GM12878 (cell line): ENCODE measurements at regions of chr17 and their contacts with region 1.

Region 1: GRCh38 chr17:40450175-40450574 is 6.9 kb downstream of the IGFBP4 start:
- DNase-seq: no peak
- ATAC-seq: peak; percentile 69
- H3K4me3 ChIP-seq: no peak overlapping the region
- H3K27ac ChIP-seq: no peak overlapping the region
- H3K4me1 ChIP-seq: peaks cover 6% of the 10 kb centered on the region
- H3K27me3 ChIP-seq: 0 out of 4 replicates have a peak, but pooled peaks cover 0 to 7% of the 10 kb centered on the region in 2 experiments
- CTCF ChIP-seq: peak; percentile 55 to 78 (median 56); a peak in 5 of 6 replicates
- EP300 ChIP-seq: no peak
- POLR2A ChIP-seq: no peak
- RAD21 ChIP-seq: peak; percentile 21; the same call in 1 of the 2 replicates

Region 2: DNA sequence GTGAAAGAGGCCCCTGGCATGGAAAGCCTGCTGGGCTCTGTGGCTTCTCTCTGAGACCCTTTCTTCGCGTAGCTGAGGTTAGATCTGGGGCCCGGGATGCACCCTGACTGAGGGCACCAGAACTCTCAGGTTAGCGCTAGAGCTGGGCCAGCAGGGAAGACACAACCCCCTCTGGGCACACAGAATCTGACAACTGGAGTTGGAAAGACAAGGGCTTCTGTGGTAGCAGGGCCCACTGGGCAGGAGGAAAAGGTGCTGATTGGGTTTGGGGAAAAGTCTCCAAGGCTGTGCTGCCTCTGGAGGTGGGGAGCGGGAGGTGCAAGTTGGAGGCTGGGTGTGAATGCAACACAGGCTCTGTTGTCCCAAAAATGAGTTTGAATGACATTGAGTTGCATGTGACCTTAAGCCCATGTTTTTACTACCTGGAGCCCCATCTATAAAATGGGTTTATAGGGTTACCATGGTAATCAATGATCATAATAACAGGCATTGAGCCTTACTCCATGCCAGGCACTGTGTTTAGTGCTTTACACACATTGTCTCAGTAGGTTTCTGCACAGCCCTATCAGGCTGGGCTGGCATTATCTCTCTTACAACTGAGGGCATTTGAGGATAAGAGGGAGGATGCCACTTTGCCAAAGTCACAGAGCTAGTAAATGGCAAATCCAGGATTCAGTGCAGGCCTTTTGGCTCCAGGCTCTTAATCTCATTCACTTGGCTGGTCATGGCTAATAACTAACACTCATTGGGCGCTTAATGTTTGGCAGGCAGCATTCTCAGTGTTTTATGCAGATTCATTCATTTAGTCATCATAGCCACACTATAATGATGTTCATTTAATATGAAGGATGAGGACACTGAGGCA is 16.4 kb before region 1 on chr17:
- CTCF ChIA-PET with region 1: interaction called, 18 read pairs
- POLR2A ChIA-PET with region 1: interaction called, 3 read pairs
- RAD21 ChIA-PET with region 1: no interaction called
- SMC1A ChIA-PET with region 1: interaction called, 4 read pairs
- in situ Hi-C with region 1: no loop called
- intact Hi-C with region 1: no loop called
- DNase-seq: no peak
- ATAC-seq: peak; percentile 88
- H3K4me3 ChIP-seq: no peak overlapping the region
- H3K27ac ChIP-seq: no peak overlapping the region
- H3K4me1 ChIP-seq: peaks cover 3% of the 10 kb centered on the region
- H3K27me3 ChIP-seq: 0 out of 4 replicates have a peak, but pooled peaks cover 0 to 3% of the 10 kb centered on the region in 2 experiments
- CTCF ChIP-seq: peak; percentile 46 to 66 (median 62)
- EP300 ChIP-seq: no peak
- POLR2A ChIP-seq: no peak
- RAD21 ChIP-seq: peak; percentile 38; the same call in 1 of the 2 replicates